Left lung (tissue), 14 donors: ENCODE measurements at regions of chr14 and their contacts with region 1.

Region 1: GRCh38 chr14:94001501-94002396 is 4.6 kb downstream of the CCDC197 start:
- DNase-seq: peak; percentile 50 to 81 (median 68)
- ATAC-seq: peak; percentile 97
- H3K4me3 ChIP-seq: no peak overlapping the region
- H3K27ac ChIP-seq: no peak overlapping the region
- H3K4me1 ChIP-seq: no peaks in the 10 kb centered on the region
- H3K27me3 ChIP-seq: peaks cover 0 to 33% of the 10 kb centered on the region in 2 donors
- CTCF ChIP-seq: peak; percentile 90 to 95

Region 2: DNA sequence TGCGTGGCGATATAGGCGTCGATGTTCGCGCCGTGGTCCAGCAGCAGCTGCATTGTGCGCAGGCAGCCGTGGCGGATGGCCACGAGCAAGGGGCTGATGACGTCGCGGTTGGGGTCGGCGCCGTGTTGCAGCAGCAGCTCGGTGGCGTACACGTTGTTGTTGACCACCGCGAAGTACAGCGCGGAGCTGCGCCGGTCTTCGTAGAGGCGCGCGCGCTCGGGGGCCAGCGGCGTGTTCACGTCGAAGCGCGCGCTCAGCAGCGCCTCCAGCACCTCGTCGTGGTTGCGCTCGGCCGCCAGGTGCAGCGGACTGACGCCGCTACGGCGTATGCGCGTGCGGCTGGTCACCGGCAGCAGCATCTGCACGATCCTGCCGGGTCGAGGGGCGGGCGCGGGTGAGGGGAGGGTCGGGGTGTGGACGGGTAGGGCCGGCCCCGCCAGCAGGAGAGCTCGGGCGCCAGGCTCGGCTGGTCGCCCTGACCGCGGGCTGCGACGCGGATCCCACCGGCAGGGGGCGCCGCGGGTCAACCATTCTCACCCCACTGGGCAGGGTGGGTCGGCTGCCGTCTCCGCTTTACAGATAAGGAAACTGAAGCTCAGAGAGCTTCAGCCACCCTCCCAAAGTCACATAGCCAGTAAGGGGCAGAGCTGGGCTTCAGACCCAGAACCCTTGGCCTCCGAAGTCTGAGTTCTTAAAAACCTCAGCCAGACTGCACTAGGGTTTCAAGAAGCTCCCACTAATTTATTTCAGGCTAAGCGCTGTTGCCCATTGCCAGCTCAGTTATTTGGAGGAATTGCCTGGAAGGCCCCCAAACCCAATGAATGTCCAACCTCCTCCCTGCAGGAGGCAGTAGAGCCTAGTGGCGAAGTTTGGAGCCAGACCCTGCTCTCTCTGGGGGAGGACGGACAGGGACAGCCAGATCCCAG is 62.2 kb before region 1 on chr14:
- intact Hi-C with region 1: loop called in 1 of 2 experiments (anchors 5 kb)
- DNase-seq: peak; percentile 28 to 96 (median 70)
- ATAC-seq: peak; percentile 97
- H3K4me3 ChIP-seq: peak overlapping the region in 1 of 2 donors; percentile 30
- H3K27ac ChIP-seq: no peak overlapping the region
- H3K4me1 ChIP-seq: peaks cover 0 to 15% of the 10 kb centered on the region in 2 donors
- H3K27me3 ChIP-seq: peaks cover 15 to 53% of the 10 kb centered on the region in 2 donors
- CTCF ChIP-seq: peak; percentile 78 to 93